Aorta (tissue), 5 donors: ENCODE measurements at regions of chr18 and their contacts with region 1.

Region 1: GRCh38 chr18:54224379-54225014 is at the start of gene MBD2:
- DNase-seq: peak; percentile 96 to 98
- ATAC-seq: peak; percentile 99
- H3K4me3 ChIP-seq: peak within 1 kb of the TSS; percentile 96 to 99
- H3K27ac ChIP-seq: peak within 1 kb of the TSS; percentile 10 to 71
- H3K4me1 ChIP-seq: no peaks in the 10 kb centered on the region
- H3K27me3 ChIP-seq: no peaks in the 10 kb centered on the region
- total RNA-seq, gene MBD2: 74.3 to 92.6 TPM

Region 2: DNA sequence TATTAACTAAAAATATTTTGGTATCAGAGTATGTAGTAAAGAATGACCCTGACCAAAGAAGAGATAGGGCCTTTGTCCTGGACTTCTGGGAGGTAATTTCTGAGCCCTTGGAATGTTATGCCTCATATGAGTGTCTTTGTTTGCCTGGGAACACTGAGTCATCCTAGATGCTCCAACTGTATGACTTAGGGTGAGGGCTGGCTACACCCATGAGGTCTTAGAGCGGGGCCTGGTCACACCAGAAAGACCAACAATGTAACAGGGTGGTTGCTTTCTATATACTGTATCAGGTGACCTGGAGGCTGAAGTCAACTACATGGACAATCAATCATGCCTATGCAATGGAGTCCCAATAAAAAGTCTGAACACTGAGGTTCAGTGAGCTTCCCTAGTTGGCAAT is 253.2 kb before region 1 on chr18:
- intact Hi-C with region 1: no loop called
- DNase-seq: no peak
- ATAC-seq: no peak
- H3K4me3 ChIP-seq: no peak overlapping the region
- H3K27ac ChIP-seq: no peak overlapping the region
- H3K4me1 ChIP-seq: no peaks in the 10 kb centered on the region
- H3K27me3 ChIP-seq: no peaks in the 10 kb centered on the region

Region 3: GRCh38 chr18:54119524-54120019 is 104.9 kb before region 1 on chr18:
- intact Hi-C with region 1: no loop called
- DNase-seq: no peak
- ATAC-seq: peak; percentile 77
- H3K4me3 ChIP-seq: no peak overlapping the region
- H3K27ac ChIP-seq: no peak overlapping the region
- H3K4me1 ChIP-seq: no peaks in the 10 kb centered on the region
- H3K27me3 ChIP-seq: no peaks in the 10 kb centered on the region

Region 4: DNA sequence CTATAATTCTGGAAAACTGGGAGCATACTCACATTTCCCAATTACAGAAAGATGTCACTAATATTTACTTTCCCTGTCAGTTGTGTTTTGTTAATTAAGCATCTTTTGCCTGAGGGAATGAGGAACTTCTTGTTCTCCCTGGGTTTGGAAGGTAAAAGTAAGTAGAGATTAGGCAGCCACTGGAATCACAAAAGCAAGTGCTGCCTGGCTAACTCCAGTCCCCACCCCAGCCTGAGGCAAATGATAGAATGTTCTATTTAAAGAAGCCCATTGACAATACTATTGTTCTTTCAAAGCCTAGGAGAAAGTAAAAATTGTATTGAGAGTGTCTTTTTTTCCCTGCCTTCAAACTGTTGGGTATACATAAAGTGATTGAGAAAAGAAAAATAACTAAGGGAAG is 93.9 kb before region 1 on chr18:
- intact Hi-C with region 1: no loop called
- DNase-seq: no peak
- ATAC-seq: no peak
- H3K4me3 ChIP-seq: no peak overlapping the region
- H3K27ac ChIP-seq: no peak overlapping the region
- H3K4me1 ChIP-seq: no peaks in the 10 kb centered on the region
- H3K27me3 ChIP-seq: no peaks in the 10 kb centered on the region

Region 5: DNA sequence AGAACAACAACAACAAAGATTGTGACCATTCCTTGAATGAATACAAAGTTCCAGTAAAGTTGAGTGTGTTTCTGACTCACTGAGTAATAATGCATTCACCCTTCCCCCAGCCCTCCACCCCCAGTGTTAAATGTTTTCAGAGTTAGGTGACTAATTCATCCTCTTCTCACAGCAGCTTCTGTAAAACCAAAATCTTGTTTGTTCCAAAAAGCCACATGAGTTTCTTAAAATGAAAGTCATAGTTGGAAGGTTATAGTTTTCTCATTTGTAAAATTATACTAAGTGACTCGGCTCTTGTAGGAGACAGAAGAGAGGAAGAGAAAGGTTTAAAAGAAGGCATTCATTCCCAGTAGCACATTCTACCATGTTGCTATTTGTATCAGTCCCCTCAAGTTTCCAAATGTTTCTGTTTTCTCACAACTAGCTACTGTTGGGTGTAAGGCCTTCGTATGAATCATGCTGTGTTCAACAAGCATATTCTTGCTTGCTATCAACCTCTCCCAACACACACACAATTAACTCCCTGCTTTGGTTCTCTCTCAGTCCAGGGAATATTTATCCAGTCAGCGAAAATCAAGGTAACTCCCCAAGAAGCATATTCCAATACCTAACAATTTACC is 75.3 kb before region 1 on chr18:
- intact Hi-C with region 1: loop called in 1 of 2 experiments (anchors 5 kb)
- DNase-seq: peak in 1 of 2 donors; percentile 65
- ATAC-seq: no peak
- H3K4me3 ChIP-seq: no peak overlapping the region
- H3K27ac ChIP-seq: peak overlapping the region; percentile 12 to 74
- H3K4me1 ChIP-seq: peaks cover 2 to 8% of the 10 kb centered on the region in 2 donors
- H3K27me3 ChIP-seq: no peaks in the 10 kb centered on the region

Region 6: GRCh38 chr18:54169431-54170403 is 54.8 kb before region 1 on chr18:
- intact Hi-C with region 1: loop called in 1 of 2 experiments (anchors 5 kb)
- DNase-seq: no peak
- ATAC-seq: no peak
- H3K4me3 ChIP-seq: no peak overlapping the region
- H3K27ac ChIP-seq: no peak overlapping the region
- H3K4me1 ChIP-seq: no peaks in the 10 kb centered on the region
- H3K27me3 ChIP-seq: no peaks in the 10 kb centered on the region

Region 7: GRCh38 chr18:54351186-54351585 is 126.7 kb after region 1 on chr18:
- intact Hi-C with region 1: no loop called
- DNase-seq: no peak
- ATAC-seq: no peak
- H3K4me3 ChIP-seq: no peak overlapping the region
- H3K27ac ChIP-seq: no peak overlapping the region
- H3K4me1 ChIP-seq: no peaks in the 10 kb centered on the region
- H3K27me3 ChIP-seq: no peaks in the 10 kb centered on the region